Sciatic nerve (tissue), 2 donors: ENCODE measurements at regions of chr9 and their contacts with region 1.

Region 1: GRCh38 chr9:119853126-119853525 is 483.9 kb upstream of the BRINP1 start:
- DNase-seq: no peak
- ATAC-seq: no peak

Region 2: GRCh38 chr9:118761016-118761790 is 1091.9 kb before region 1 on chr9:
- intact Hi-C with region 1: loop called (anchors 10 kb)
- DNase-seq: no peak
- ATAC-seq: no peak